ENCODE measurements at regions of chr11 and their contacts with region 1.

Region 1: GRCh38 chr11:103055221-103055890 is 36.6 kb downstream of the DCUN1D5 start:
- DNase-seq: no peak
- H3K4me3 ChIP-seq: no peak overlapping the region
- H3K27me3 ChIP-seq: no peaks in the 10 kb centered on the region
- CTCF ChIP-seq: peak; percentile 64

Region 2: DNA sequence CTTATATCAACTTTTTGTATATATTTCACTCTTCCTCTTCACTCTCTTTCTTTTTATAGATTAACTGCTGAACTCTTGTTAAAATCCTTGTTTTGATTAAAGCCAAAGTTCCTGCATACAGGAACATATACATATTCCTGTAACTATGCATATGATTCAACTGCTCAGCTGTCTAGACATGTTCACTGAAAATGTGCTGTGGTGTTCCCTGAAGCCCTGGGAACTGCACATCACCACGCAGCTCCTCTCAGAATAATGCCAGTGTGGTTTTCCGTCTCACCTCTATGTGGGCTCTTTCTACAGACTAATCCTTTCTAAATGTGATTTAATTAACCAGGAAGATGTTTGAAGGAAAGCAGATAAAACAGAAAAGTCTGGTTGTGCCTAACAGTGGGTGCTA is 155.0 kb before region 1 on chr11:
- CTCF ChIA-PET with region 1: no interaction called
- POLR2A ChIA-PET with region 1: no interaction called
- DNase-seq: no peak
- H3K4me3 ChIP-seq: no peak overlapping the region
- H3K27me3 ChIP-seq: no peaks in the 10 kb centered on the region
- CTCF ChIP-seq: no peak

Region 3: DNA sequence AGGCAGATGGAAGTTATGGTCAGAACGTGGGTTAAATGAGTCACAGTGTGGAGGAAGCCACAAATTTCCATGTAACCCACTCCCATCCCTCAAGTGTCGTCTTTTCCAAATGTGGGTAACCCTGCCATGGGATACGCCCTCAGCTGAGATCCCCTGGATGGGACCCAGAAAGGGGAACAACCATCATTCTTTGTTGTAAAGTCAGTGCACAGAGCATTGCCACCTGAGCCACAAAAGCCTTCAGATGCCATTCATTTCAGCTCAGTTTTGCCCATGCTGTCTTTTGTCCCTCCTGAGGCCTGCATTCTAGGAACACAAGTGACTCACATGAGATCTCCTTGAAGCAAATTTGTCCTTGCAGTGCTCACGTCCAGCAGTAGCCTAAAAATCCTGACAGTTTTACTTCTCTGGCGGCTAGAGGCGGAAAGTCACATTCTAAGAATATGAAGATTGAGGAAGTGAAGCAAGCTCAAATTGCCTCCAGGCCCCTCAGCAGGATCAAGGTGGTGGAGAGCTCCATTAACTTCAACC is 130.4 kb before region 1 on chr11:
- CTCF ChIA-PET with region 1: no interaction called
- POLR2A ChIA-PET with region 1: no interaction called
- DNase-seq: peak; percentile 44
- H3K4me3 ChIP-seq: no peak overlapping the region
- H3K27me3 ChIP-seq: no peaks in the 10 kb centered on the region; the same call in 1 of the 2 replicates
- CTCF ChIP-seq: no peak

Region 4: GRCh38 chr11:103035791-103036434 is 19.4 kb before region 1 on chr11:
- CTCF ChIA-PET with region 1: interaction called, 12 read pairs
- POLR2A ChIA-PET with region 1: no interaction called
- DNase-seq: peak; percentile 52
- H3K4me3 ChIP-seq: no peak overlapping the region
- H3K27me3 ChIP-seq: no peaks in the 10 kb centered on the region
- CTCF ChIP-seq: peak; percentile 62